B cell (primary cell): ENCODE measurements at regions of chr17 and their contacts with region 1.

Region 1: GRCh38 chr17:35486920-35487732 is 38.6 kb upstream of the SLFN13 start:
- DNase-seq: peak; percentile 65
- ATAC-seq: peak; percentile 53
- H3K4me3 ChIP-seq: peak overlapping the region; percentile 67 to 94 (median 79)
- H3K4me3 Mint-ChIP-seq: peak overlapping the region; percentile 98
- H3K27ac ChIP-seq: no peak overlapping the region
- H3K27ac Mint-ChIP-seq: peak overlapping the region; percentile 87
- H3K4me1 ChIP-seq: peaks cover 22 to 23% of the 10 kb centered on the region in 2 donors
- H3K4me1 Mint-ChIP-seq: peaks cover 25% of the 10 kb centered on the region
- H3K27me3 ChIP-seq: peaks cover 0 to 44% (median 35%) of the 10 kb centered on the region in 4 experiments
- H3K27me3 Mint-ChIP-seq: peaks cover 36% of the 10 kb centered on the region
- CTCF ChIP-seq: no peak

Region 2: DNA sequence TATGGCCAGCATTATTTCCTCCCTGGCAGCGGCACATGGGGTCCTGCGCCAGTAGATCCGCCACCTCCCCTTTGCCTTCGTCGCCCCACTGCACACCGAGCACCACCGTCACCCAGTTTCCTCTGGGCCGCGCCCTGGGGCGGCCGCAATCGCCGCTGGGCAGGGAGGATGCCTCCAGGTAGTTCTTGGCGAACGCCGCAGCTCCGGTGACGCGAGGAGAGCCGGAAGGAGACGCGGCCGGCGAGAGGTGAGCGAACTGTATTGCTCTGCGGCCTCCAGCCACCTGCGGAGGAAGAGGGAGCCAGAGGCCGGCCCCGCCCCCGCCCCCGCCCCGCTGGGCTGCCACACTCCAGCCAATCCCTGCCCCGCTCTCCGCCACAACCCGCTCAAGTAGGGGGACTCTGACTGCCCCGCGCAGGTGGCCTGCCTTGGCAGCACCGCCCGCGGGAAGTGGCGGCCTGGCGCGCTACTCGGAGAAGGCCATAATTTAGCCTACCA is 26.7 kb before region 1 on chr17:
- CTCF ChIA-PET with region 1: interaction called, 3 read pairs
- POLR2A ChIA-PET with region 1: interaction called, 3 read pairs
- intact Hi-C with region 1: loop called (anchors 1 kb)
- DNase-seq: peak; percentile 92
- ATAC-seq: peak; percentile 92
- H3K4me3 ChIP-seq: peak overlapping the region in 4 of 5 experiments; percentile 11 to 56 (median 42)
- H3K4me3 Mint-ChIP-seq: peak overlapping the region; percentile 88
- H3K27ac ChIP-seq: peak overlapping the region; percentile 22 to 39
- H3K27ac Mint-ChIP-seq: peak overlapping the region; percentile 87
- H3K4me1 ChIP-seq: peaks cover 12 to 13% of the 10 kb centered on the region in 2 donors
- H3K4me1 Mint-ChIP-seq: peaks cover 21% of the 10 kb centered on the region
- H3K27me3 ChIP-seq: no peaks in the 10 kb centered on the region
- H3K27me3 Mint-ChIP-seq: no peaks in the 10 kb centered on the region
- CTCF ChIP-seq: no peak

Region 3: DNA sequence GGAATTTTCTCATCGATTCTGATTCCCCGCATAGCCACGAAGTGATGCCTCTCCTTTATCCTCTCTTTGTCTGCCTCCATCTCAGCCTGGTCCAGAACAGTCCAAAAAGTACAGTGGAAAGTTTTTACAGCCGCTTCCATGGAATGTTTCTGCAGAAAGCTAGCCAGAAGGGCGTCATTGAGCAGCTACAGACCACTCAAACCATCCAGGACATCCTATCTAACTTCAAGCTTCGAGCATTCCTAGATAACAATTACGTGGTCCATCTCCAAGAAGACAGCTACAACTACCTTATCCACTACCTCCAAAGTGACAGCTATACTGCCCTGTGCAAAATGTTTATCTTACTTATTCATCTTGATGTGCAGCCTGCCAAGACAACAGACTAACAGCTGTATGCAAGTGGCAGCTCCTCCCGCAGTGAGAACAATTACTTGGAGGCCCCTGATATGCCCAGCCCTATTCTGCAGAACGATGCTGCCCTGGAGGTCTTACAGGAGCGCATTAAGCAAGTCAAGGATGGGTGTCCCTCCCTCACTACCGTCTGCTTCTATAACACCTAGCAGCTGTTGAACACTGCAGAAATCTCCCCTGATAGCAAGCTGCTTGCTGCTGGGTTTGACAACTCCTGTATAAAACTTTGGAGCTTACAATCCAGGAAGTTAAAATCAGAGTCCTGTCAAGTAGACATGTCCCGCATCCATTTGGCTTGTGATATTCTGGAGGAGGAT is 11.5 kb after region 1 on chr17:
- CTCF ChIA-PET with region 1: interaction called, 5 read pairs
- POLR2A ChIA-PET with region 1: interaction called, 3 read pairs
- intact Hi-C with region 1: loop called (anchors 1 kb)
- DNase-seq: no peak
- ATAC-seq: no peak
- H3K4me3 ChIP-seq: peak overlapping the region in 1 of 5 experiments; percentile 16
- H3K4me3 Mint-ChIP-seq: peak overlapping the region; percentile 3
- H3K27ac ChIP-seq: no peak overlapping the region
- H3K27ac Mint-ChIP-seq: no peak overlapping the region
- H3K4me1 ChIP-seq: peaks cover 22 to 25% of the 10 kb centered on the region in 2 donors
- H3K4me1 Mint-ChIP-seq: peaks cover 22% of the 10 kb centered on the region
- H3K27me3 ChIP-seq: peaks cover 0 to 65% (median 45%) of the 10 kb centered on the region in 4 experiments
- H3K27me3 Mint-ChIP-seq: peaks cover 59% of the 10 kb centered on the region
- CTCF ChIP-seq: no peak